GM12878 (cell line): ENCODE measurements at regions of chr6 and their contacts with region 1.

Region 1: DNA sequence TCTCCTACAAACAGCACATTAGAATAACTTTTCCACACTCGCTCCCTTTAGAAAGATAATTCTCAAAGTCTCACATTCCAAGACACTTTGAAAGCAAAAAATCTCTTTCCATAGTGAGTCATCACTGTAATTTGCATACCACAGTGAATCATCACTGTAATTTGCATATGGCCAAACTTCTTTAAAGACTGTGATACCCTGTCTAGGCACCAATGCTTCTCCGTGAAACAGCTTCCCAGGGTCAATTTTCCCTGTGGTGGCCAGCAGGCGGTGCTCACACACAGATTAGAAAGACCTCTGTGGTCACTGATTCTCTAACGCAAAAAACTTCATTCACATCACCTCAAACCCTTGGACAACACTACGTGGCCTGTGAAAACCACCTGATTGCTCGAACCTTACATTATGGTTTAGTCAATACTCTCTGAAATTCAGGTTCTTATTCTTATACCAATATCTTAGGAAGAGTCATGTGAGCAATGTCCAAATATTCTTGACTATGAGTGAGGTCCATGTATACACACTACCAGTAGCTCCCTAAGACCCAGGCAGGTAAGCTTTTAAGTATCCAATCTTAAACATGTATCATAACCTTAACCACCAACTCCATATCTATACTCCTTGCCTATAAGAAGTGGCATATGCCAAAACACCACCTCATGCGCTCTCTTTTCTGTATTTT is 78.5 kb upstream of the PHACTR1 start:
- DNase-seq: peak; percentile 16
- ATAC-seq: peak; percentile 94
- H3K4me3 ChIP-seq: no peak overlapping the region
- H3K27ac ChIP-seq: no peak overlapping the region
- H3K4me1 ChIP-seq: no peaks in the 10 kb centered on the region
- H3K27me3 ChIP-seq: no peaks in the 10 kb centered on the region
- CTCF ChIP-seq: peak; percentile 77 to 87 (median 80)
- EP300 ChIP-seq: no peak
- POLR2A ChIP-seq: no peak
- RAD21 ChIP-seq: peak; percentile 82

Region 2: GRCh38 chr6:12354499-12354898 is 283.6 kb before region 1 on chr6:
- CTCF ChIA-PET with region 1: no interaction called
- POLR2A ChIA-PET with region 1: no interaction called
- RAD21 ChIA-PET with region 1: no interaction called
- SMC1A ChIA-PET with region 1: no interaction called
- in situ Hi-C with region 1: no loop called
- intact Hi-C with region 1: no loop called
- DNase-seq: peak; percentile 91
- ATAC-seq: peak; percentile 77
- H3K4me3 ChIP-seq: no peak overlapping the region
- H3K27ac ChIP-seq: peak overlapping the region; percentile 56
- H3K4me1 ChIP-seq: peaks cover 47% of the 10 kb centered on the region
- H3K27me3 ChIP-seq: no peaks in the 10 kb centered on the region
- CTCF ChIP-seq: no peak
- EP300 ChIP-seq: peak; percentile 43 to 56; a peak in 2 of 4 replicates
- POLR2A ChIP-seq: no peak
- RAD21 ChIP-seq: no peak

Region 3: DNA sequence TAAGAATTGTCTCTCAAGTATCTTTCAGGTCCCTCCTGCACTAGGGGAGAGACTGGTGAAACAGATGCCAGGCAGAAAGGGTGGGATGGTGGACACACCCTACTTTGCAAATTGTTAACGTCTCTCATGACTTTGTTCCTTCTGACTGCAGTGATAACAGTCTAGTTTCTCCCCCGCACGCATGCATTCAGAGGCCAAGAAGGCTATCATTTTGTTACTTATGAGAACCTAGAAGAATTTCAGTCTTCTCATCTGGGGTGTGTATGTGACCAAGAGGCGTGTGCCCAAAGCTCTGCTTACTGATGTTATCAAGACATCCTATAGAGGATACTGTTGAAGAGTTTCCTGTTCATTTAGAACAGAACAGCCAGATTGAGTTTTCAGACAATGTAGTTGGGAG is 195.6 kb before region 1 on chr6:
- CTCF ChIA-PET with region 1: no interaction called
- POLR2A ChIA-PET with region 1: no interaction called
- RAD21 ChIA-PET with region 1: no interaction called
- SMC1A ChIA-PET with region 1: no interaction called
- in situ Hi-C with region 1: no loop called
- intact Hi-C with region 1: no loop called
- DNase-seq: no peak
- ATAC-seq: no peak
- H3K4me3 ChIP-seq: no peak overlapping the region
- H3K27ac ChIP-seq: no peak overlapping the region
- H3K4me1 ChIP-seq: no peaks in the 10 kb centered on the region
- H3K27me3 ChIP-seq: no peaks in the 10 kb centered on the region
- CTCF ChIP-seq: no peak
- EP300 ChIP-seq: no peak
- POLR2A ChIP-seq: no peak
- RAD21 ChIP-seq: no peak

Region 4: DNA sequence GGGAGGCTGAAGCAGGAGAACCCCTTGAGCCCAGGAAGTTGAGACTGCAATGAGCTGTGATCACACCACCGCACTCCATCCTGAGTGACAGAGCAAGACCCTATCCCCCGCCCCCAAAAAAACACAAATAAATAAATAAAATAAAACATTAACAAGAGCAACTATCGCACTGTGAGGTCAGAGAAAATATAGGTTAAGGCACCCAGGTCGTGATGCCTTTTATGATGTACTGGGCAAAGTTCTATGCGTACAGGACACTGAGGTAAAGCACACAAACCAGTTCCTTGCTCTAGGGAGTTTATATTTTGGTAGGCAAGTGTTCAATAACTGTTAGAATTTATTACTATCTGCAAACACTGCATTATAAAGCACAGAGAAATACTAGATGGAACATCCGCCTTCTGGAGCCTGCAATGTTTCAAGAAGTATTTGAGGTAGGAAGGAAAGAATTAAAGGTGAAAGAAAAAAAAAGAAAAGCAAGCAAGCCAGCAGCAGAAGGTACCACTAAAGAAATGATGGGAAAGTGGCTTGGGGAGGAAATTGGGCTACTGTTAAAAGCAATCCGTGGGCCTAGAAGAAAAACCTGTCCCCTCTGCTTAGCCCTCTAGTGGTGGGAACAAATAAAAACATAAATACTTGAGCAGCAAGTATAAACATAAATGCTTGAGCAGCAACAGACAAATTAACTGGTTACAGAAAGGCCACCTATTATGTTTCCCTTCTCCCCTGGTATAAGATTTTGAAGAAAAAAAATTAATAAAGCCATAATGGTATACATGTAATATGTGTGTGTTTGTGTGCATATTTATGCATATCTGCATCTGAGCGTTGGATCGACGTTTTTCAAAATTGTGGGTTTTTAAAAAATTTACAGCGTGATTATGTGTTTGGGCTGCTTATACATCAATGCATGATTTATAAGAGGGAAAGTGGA is 206.5 kb after region 1 on chr6:
- CTCF ChIA-PET with region 1: interaction called, 14 read pairs
- POLR2A ChIA-PET with region 1: no interaction called
- RAD21 ChIA-PET with region 1: interaction called, 3 read pairs
- SMC1A ChIA-PET with region 1: interaction called, 3 read pairs
- in situ Hi-C with region 1: no loop called
- intact Hi-C with region 1: loop called (anchors 1 kb)
- DNase-seq: no peak
- ATAC-seq: peak; percentile 48; the same call in 1 of the 3 replicates
- H3K4me3 ChIP-seq: no peak overlapping the region
- H3K27ac ChIP-seq: no peak overlapping the region
- H3K4me1 ChIP-seq: no peaks in the 10 kb centered on the region
- H3K27me3 ChIP-seq: peaks cover 0 to 1% of the 10 kb centered on the region in 2 experiments; a peak in 3 of 4 replicates
- CTCF ChIP-seq: peak; percentile 46 to 64 (median 61); a peak in 5 of 6 replicates
- EP300 ChIP-seq: no peak
- POLR2A ChIP-seq: no peak
- RAD21 ChIP-seq: peak; percentile 40

Region 5: DNA sequence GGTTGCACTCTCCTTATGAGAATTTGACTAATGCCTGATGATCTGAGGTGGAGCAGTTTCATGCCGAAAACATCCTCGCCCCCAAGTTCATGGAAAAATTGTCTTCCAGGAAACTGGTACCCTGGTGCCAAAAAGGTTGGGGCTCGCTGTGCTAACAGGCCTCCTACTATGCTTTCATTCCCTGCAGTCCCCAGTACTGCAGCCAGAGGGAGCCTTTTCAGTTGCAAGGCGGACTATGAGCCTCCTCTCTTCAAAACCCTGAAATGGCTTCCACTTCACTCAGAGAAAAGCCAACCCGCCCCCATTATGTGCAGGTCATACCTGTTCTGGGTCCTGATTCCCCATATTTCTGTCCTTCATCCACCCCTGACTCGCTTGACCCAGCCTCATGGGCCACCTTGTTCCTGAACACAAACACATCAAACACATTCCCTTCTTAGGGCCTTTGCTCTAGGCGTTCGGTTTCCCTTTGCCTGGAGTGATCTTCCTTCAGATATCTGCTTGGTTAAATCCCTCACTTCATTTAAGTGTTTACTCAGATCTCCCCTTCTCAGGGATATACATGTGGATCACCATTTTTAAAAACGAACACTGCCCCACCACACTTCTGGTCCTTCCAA is 252.2 kb after region 1 on chr6:
- CTCF ChIA-PET with region 1: interaction called, 34 read pairs
- POLR2A ChIA-PET with region 1: no interaction called
- RAD21 ChIA-PET with region 1: interaction called, 3 read pairs
- SMC1A ChIA-PET with region 1: interaction called, 11 read pairs
- in situ Hi-C with region 1: no loop called
- intact Hi-C with region 1: loop called (anchors 1 kb)
- DNase-seq: no peak
- ATAC-seq: peak; percentile 65
- H3K4me3 ChIP-seq: no peak overlapping the region
- H3K27ac ChIP-seq: no peak overlapping the region
- H3K4me1 ChIP-seq: no peaks in the 10 kb centered on the region
- H3K27me3 ChIP-seq: no peaks in the 10 kb centered on the region; a peak in 2 of 4 replicates
- CTCF ChIP-seq: peak; percentile 32 to 64 (median 55)
- EP300 ChIP-seq: no peak
- POLR2A ChIP-seq: no peak
- RAD21 ChIP-seq: no peak

Region 6: GRCh38 chr6:13296536-13296997 is 658.5 kb after region 1 on chr6:
- CTCF ChIA-PET with region 1: no interaction called
- POLR2A ChIA-PET with region 1: no interaction called
- RAD21 ChIA-PET with region 1: no interaction called
- SMC1A ChIA-PET with region 1: no interaction called
- in situ Hi-C with region 1: no loop called
- intact Hi-C with region 1: no loop called
- DNase-seq: no peak
- ATAC-seq: peak; percentile 27
- H3K4me3 ChIP-seq: no peak overlapping the region
- H3K27ac ChIP-seq: no peak overlapping the region
- H3K4me1 ChIP-seq: no peaks in the 10 kb centered on the region; the same call in 1 of the 2 replicates
- H3K27me3 ChIP-seq: no peaks in the 10 kb centered on the region
- CTCF ChIP-seq: no peak
- EP300 ChIP-seq: no peak
- POLR2A ChIP-seq: no peak
- RAD21 ChIP-seq: no peak